AG04449 (cell line): ENCODE measurements at regions of chr2 and their contacts with region 1.

Region 1: DNA sequence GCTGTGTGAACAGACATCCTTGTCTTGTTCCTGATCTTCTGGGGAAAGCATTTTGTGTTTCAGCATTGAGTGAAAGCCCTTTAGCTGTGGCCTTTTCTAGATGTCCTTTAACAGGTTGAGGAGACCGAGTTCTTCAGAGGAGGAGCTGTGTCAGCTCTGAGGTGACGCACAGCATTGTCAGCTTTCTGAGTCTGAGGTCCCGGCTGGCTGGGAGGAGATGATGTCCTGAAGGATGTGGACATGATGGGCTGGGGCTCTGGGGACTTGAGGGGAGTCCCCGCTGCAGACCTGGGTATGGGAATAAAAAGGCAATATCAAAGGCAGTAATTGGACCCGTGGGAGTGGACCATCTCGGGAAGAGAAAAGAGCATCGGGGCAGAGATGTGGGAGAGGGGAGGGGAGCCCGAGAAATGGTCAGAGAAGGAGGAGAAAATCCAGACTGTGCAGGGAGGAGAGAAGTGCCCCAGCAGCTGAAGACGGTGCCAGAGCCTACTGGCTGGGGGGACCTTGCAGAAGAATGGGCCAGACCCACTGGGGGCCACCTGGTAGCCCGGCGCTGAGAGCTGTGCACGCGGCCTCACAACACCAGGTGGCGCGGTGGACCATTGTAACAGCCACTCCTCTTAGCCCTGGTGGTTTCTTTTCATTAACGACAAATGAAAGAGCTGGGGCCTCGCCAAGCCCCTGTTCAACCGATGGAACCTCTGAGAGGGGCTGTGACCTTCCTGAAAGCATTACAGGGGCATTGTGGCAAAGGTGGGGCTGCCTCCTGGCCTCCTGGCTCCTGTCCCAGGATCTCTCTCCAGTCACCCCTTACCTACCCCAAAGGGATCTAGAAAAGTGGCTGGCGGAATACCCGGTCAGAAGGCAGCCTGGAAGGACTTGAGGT is 61.6 kb downstream of the ST3GAL5 start:
- DNase-seq: no peak
- H3K4me3 ChIP-seq: no peak overlapping the region; the same call in 1 of the 2 replicates
- CTCF ChIP-seq: peak; percentile 98

Region 2: DNA sequence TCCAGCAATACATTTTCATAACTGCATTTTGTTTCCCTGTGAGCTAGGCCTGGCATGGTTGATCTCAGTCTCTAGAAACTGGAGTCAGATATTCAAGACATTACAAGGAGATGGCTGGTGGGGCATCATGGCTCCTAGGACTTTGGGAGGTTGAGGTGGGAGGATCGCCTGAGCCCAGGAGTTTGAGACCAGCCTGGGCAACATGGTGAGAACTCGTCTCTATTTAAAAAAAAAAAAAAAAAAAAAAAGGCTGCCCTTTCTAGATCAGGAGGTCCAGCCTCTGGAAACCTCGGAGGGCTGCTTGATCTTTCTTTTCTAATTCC is 250.2 kb before region 1 on chr2:
- CTCF ChIA-PET with region 1: no interaction called
- POLR2A ChIA-PET with region 1: no interaction called
- DNase-seq: no peak
- H3K4me3 ChIP-seq: no peak overlapping the region
- CTCF ChIP-seq: no peak

Region 3: DNA sequence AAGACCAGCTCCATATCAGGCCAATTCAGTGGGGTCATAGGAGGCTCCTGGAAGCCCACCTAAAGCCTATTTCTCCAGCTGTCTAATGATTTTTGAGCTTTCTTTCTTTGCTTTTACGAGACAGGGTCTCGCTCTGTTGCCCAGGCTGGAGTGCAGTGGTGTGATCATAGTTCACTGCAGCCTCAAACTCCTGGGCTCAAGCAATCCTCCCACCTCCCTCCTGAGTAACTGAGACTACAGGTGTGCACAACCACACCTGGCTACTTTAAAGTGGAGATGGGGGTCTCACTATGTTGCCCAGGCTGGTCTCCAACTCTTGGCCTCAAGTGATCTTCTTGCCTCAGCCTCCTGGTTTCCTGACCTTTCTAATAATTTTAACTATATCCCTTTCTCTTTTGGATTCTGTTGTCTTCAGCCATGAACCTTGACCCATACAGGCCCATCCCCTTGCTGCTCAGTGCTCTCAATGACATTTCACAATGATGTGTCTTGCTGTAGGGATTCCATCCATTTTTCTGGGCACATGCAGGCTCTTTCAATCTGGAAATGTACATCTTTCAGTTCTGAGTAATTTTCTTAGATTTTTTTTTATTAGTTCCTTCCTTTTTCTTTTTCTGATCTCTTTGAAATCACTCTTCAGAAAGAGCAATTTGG is 103.4 kb before region 1 on chr2:
- CTCF ChIA-PET with region 1: interaction called, 348 read pairs
- POLR2A ChIA-PET with region 1: no interaction called
- DNase-seq: no peak
- H3K4me3 ChIP-seq: no peak overlapping the region
- CTCF ChIP-seq: no peak

Region 4: DNA sequence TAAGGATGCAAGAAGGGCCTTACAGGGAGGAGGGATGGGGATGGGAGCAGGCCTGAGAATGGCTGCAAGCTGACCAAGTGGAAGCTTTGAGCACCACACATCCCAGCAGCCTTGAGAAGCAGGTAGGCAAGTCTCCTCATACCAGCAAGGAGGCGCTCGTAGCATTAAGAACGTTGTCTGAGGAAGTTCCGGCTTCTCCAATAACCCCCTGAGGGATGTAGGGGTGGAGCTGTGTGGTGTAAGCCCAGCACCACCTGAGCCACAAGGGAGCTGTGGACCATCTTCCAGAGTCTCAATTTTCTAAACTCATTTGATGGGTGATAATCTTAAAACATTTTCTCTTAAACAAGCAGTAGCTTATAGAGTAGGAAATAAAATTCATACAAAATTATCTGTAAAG is 10.9 kb after region 1 on chr2:
- CTCF ChIA-PET with region 1: interaction called, 42 read pairs
- POLR2A ChIA-PET with region 1: no interaction called
- DNase-seq: no peak
- H3K4me3 ChIP-seq: no peak overlapping the region
- CTCF ChIP-seq: no peak

Region 5: GRCh38 chr2:85865539-85866164 is 38.4 kb after region 1 on chr2:
- CTCF ChIA-PET with region 1: interaction called, 13 read pairs
- POLR2A ChIA-PET with region 1: no interaction called
- DNase-seq: no peak
- H3K4me3 ChIP-seq: no peak overlapping the region
- CTCF ChIP-seq: no peak

Region 6: GRCh38 chr2:85999061-85999831 is 172.0 kb after region 1 on chr2:
- CTCF ChIA-PET with region 1: interaction called, 27 read pairs
- POLR2A ChIA-PET with region 1: no interaction called
- DNase-seq: no peak
- H3K4me3 ChIP-seq: no peak overlapping the region
- CTCF ChIP-seq: no peak

Region 7: GRCh38 chr2:86062043-86062442 is 234.8 kb after region 1 on chr2:
- CTCF ChIA-PET with region 1: interaction called, 74 read pairs
- POLR2A ChIA-PET with region 1: no interaction called
- DNase-seq: no peak
- H3K4me3 ChIP-seq: no peak overlapping the region
- CTCF ChIP-seq: no peak

Region 8: GRCh38 chr2:86105252-86105968 is 278.2 kb after region 1 on chr2 and contains the start of gene POLR1A:
- CTCF ChIA-PET with region 1: interaction called, 12 read pairs
- POLR2A ChIA-PET with region 1: no interaction called
- DNase-seq: peak; percentile 76
- H3K4me3 ChIP-seq: peak within 1 kb of the TSS; percentile 84
- CTCF ChIP-seq: no peak